H1 (cell line): ENCODE measurements at regions of chr1 and their contacts with region 1.

Region 1: GRCh38 chr1:159891275-159892157 is 8.4 kb downstream of the CFAP45 start:
- DNase-seq: peak; percentile 66 to 77
- H3K4me3 ChIP-seq: no peak overlapping the region
- H3K27ac ChIP-seq: no peak overlapping the region
- H3K4me1 ChIP-seq: no peaks in the 10 kb centered on the region
- H3K27me3 ChIP-seq: no peaks in the 10 kb centered on the region
- CTCF ChIP-seq: peak; percentile 99 to 100 (median 100)
- EP300 ChIP-seq: no peak
- POLR2A ChIP-seq: no peak
- RAD21 ChIP-seq: peak; percentile 100

Region 2: GRCh38 chr1:159197561-159198557 is 693.7 kb before region 1 on chr1:
- CTCF ChIA-PET with region 1: interaction called, 17 read pairs
- POLR2A ChIA-PET with region 1: no interaction called
- DNase-seq: peak in 1 of 2 experiments; percentile 89
- H3K4me3 ChIP-seq: no peak overlapping the region
- H3K27ac ChIP-seq: no peak overlapping the region
- H3K4me1 ChIP-seq: no peaks in the 10 kb centered on the region
- H3K27me3 ChIP-seq: no peaks in the 10 kb centered on the region
- CTCF ChIP-seq: peak; percentile 85 to 99 (median 98)
- EP300 ChIP-seq: no peak
- POLR2A ChIP-seq: no peak
- RAD21 ChIP-seq: peak; percentile 77 to 82

Region 3: GRCh38 chr1:159492575-159493323 is 398.8 kb before region 1 on chr1:
- CTCF ChIA-PET with region 1: no interaction called
- POLR2A ChIA-PET with region 1: no interaction called
- DNase-seq: no peak
- H3K4me3 ChIP-seq: no peak overlapping the region
- H3K27ac ChIP-seq: no peak overlapping the region
- H3K4me1 ChIP-seq: no peaks in the 10 kb centered on the region
- H3K27me3 ChIP-seq: no peaks in the 10 kb centered on the region
- CTCF ChIP-seq: no peak
- EP300 ChIP-seq: no peak
- POLR2A ChIP-seq: no peak
- RAD21 ChIP-seq: no peak

Region 4: GRCh38 chr1:159780583-159781582 is 110.6 kb before region 1 on chr1 and contains the start of gene DUSP23:
- CTCF ChIA-PET with region 1: interaction called, 39 read pairs
- POLR2A ChIA-PET with region 1: interaction called, 3 read pairs
- DNase-seq: peak; percentile 96
- H3K4me3 ChIP-seq: peak within 1 kb of the TSS; percentile 47 to 80 (median 61)
- H3K27ac ChIP-seq: 0 out of 2 replicates have a peak within 1 kb of the TSS, but pooled peaks have one; percentile 48
- H3K4me1 ChIP-seq: peaks cover 2 to 13% (median 9%) of the 10 kb centered on the region in 4 experiments; a peak in 4 of 7 replicates
- H3K27me3 ChIP-seq: peaks cover 0 to 2% (median 0%) of the 10 kb centered on the region in 4 experiments; a peak in 1 of 7 replicates
- CTCF ChIP-seq: peak; percentile 96 to 98 (median 97)
- EP300 ChIP-seq: no peak
- POLR2A ChIP-seq: peak in 1 of 2 experiments; percentile 47; a peak in 1 of 3 replicates
- RAD21 ChIP-seq: peak; percentile 87
- total RNA-seq, gene DUSP23: 45.8 and 48.3 TPM in 2 replicates

Region 5: GRCh38 chr1:159821171-159821867 is 70.2 kb before region 1 on chr1:
- CTCF ChIA-PET with region 1: interaction called, 645 read pairs
- POLR2A ChIA-PET with region 1: no interaction called
- DNase-seq: no peak
- H3K4me3 ChIP-seq: no peak overlapping the region
- H3K27ac ChIP-seq: no peak overlapping the region
- H3K4me1 ChIP-seq: 0 out of 7 replicates have a peak, but pooled peaks cover 0 to 3% (median 0%) of the 10 kb centered on the region in 4 experiments
- H3K27me3 ChIP-seq: no peaks in the 10 kb centered on the region
- CTCF ChIP-seq: peak in 2 of 3 experiments; percentile 34 to 48; a peak in 3 of 4 replicates
- EP300 ChIP-seq: no peak
- POLR2A ChIP-seq: no peak
- RAD21 ChIP-seq: peak in 1 of 2 experiments; percentile 15; a peak in 2 of 4 replicates

Region 6: DNA sequence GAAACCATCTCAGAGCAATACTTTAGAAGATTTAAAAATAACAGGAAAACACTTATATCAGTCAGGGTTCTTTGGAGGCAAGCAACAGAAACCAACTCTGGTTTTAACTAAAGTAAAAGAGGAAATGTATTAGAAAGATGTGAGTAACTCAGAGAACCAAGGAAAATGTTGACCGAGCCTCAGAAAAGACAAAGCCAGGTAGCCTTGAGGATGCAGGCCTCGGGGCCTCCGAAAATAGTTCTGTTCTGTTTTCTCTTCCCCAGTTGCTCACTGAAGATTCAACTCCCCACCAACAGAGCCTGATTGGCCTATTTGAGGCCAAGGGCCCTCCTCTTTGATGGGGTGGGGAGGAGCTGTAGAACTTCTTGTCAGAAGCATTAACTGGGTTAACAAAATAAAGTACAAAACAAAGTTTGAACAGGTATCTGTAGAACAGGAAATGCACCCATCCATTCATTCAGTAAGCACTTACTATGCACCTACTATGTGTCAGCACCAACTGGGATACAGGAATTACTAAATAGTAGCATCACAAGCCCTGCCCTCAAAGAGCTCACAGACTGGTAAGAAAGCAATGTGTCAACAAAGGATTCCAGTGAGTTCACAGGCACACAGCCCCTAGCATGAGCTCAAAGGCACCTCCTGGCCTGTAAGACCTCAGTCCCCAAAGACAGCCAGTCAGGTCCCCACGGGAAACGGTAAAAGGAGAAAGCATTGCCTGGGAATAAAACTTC is 52.2 kb before region 1 on chr1:
- CTCF ChIA-PET with region 1: interaction called, 175 read pairs
- POLR2A ChIA-PET with region 1: no interaction called
- DNase-seq: no peak
- H3K4me3 ChIP-seq: no peak overlapping the region
- H3K27ac ChIP-seq: no peak overlapping the region
- H3K4me1 ChIP-seq: no peaks in the 10 kb centered on the region
- H3K27me3 ChIP-seq: peaks cover 0 to 2% (median 0%) of the 10 kb centered on the region in 4 experiments; a peak in 2 of 7 replicates
- CTCF ChIP-seq: no peak
- EP300 ChIP-seq: no peak
- POLR2A ChIP-seq: no peak
- RAD21 ChIP-seq: no peak

Region 7: DNA sequence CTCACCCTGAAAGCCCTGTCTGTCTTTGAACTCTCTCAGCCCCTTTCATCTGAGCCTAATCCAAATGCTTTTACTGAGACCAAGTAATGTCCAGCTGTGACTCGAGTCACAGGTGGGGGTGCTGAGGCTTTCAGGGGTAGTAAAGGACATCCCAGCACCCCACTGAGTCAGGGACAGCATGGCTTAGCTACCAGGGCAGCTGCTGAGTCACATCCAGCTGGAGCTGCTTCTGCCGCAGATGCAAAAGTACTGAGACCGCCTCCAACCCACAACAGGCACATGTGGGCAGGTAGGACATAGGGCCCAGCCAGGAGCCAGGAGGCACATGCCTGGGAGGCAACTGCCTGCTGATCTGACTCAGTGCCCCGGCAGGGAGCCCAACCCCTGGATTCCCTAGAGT is 22.3 kb before region 1 on chr1:
- CTCF ChIA-PET with region 1: interaction called, 111 read pairs
- POLR2A ChIA-PET with region 1: no interaction called
- DNase-seq: no peak
- H3K4me3 ChIP-seq: no peak overlapping the region
- H3K27ac ChIP-seq: no peak overlapping the region
- H3K4me1 ChIP-seq: no peaks in the 10 kb centered on the region; a peak in 1 of 7 replicates
- H3K27me3 ChIP-seq: no peaks in the 10 kb centered on the region
- CTCF ChIP-seq: no peak
- EP300 ChIP-seq: no peak
- POLR2A ChIP-seq: no peak
- RAD21 ChIP-seq: no peak

Region 8: DNA sequence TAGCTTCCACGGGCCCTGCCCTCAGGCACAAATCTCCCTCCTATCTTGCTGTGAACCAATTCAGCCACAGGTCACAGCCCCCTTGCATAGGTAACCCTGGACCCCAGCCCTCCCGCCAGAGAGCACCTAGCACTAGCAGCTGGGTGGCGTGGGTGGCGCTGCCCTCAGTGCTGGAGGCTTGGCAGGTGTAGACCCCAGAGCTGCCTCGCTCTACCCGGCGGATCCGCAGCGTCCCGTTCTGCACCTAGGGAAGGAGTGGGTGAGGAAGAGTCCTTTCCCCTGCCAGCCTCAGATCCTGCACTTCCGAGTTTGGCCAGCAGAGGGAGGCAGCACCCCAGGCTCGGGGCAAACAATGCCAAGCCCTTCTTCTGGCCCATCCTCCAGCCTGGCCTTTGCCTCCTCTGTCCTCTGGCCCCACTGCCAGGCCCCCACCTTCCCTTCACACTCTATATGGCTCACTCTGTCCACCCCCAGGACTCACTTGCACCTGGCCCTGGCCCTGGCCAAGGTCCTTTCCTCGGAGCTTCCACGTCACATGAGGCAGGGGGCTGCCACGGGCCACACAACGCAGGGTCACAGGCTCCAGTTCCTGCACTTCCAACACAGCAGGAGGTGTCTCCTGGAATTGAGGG is 44.9 kb after region 1 on chr1:
- CTCF ChIA-PET with region 1: interaction called, 124 read pairs
- POLR2A ChIA-PET with region 1: no interaction called
- DNase-seq: peak in 1 of 2 experiments; percentile 100
- H3K4me3 ChIP-seq: no peak overlapping the region
- H3K27ac ChIP-seq: no peak overlapping the region
- H3K4me1 ChIP-seq: peaks cover 0 to 12% (median 7%) of the 10 kb centered on the region in 4 experiments; a peak in 6 of 7 replicates
- H3K27me3 ChIP-seq: no peaks in the 10 kb centered on the region
- CTCF ChIP-seq: peak; percentile 97 to 99 (median 99)
- EP300 ChIP-seq: no peak
- POLR2A ChIP-seq: no peak
- RAD21 ChIP-seq: peak; percentile 98 to 99

Region 9: GRCh38 chr1:159979257-159979656 is 87.7 kb after region 1 on chr1:
- CTCF ChIA-PET with region 1: no interaction called
- POLR2A ChIA-PET with region 1: no interaction called
- DNase-seq: no peak
- H3K4me3 ChIP-seq: no peak overlapping the region
- H3K27ac ChIP-seq: no peak overlapping the region
- H3K4me1 ChIP-seq: 0 out of 7 replicates have a peak, but pooled peaks cover 0 to 2% (median 0%) of the 10 kb centered on the region in 4 experiments
- H3K27me3 ChIP-seq: peaks cover 0 to 3% (median under 1%) of the 10 kb centered on the region in 4 experiments; a peak in 1 of 7 replicates
- CTCF ChIP-seq: no peak
- EP300 ChIP-seq: no peak
- POLR2A ChIP-seq: no peak
- RAD21 ChIP-seq: no peak

Region 10: GRCh38 chr1:160087118-160087662 is 195.7 kb after region 1 on chr1:
- CTCF ChIA-PET with region 1: no interaction called
- POLR2A ChIA-PET with region 1: no interaction called
- DNase-seq: no peak
- H3K4me3 ChIP-seq: no peak overlapping the region
- H3K27ac ChIP-seq: no peak overlapping the region
- H3K4me1 ChIP-seq: peaks cover 0 to 5% (median 3%) of the 10 kb centered on the region in 4 experiments; a peak in 4 of 7 replicates
- H3K27me3 ChIP-seq: peaks cover 0 to 28% (median 22%) of the 10 kb centered on the region in 4 experiments; a peak in 6 of 7 replicates
- CTCF ChIP-seq: no peak
- EP300 ChIP-seq: no peak
- POLR2A ChIP-seq: no peak
- RAD21 ChIP-seq: no peak

Region 11: DNA sequence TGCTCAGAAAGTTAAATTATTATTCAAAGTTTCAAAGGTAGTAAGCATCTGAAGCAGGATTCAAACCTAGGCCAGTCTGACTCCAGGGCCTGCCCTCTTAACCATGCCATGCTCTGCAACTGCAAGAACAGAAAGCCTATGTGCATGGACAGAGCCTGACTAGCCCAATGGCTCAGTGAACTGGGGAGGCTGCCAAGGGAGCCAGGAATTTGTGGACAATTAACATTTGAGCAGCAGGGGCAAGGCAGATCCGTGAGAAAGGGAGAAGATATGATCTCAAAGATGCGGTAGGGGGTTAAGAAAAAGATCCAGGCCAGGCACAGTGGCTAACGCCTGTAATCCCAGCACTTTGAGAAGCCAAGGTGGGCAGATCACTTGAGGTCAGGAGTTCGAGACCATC is 253.4 kb after region 1 on chr1:
- CTCF ChIA-PET with region 1: no interaction called
- POLR2A ChIA-PET with region 1: no interaction called
- DNase-seq: no peak
- H3K4me3 ChIP-seq: no peak overlapping the region
- H3K27ac ChIP-seq: no peak overlapping the region
- H3K4me1 ChIP-seq: 0 out of 7 replicates have a peak, but pooled peaks cover 0 to 2% (median 0%) of the 10 kb centered on the region in 4 experiments
- H3K27me3 ChIP-seq: no peaks in the 10 kb centered on the region
- CTCF ChIP-seq: no peak
- EP300 ChIP-seq: no peak
- POLR2A ChIP-seq: no peak
- RAD21 ChIP-seq: no peak